ENCODE measurements at regions of chr2 and their contacts with region 1.

Region 1: GRCh38 chr2:30266051-30266621 is 34.8 kb downstream of the LBH start:
- DNase-seq: peak; percentile 75
- H3K4me3 Mint-ChIP-seq: peak overlapping the region; percentile 76
- H3K27ac Mint-ChIP-seq: peak overlapping the region; percentile 94
- H3K4me1 Mint-ChIP-seq: peaks cover 72% of the 10 kb centered on the region
- H3K27me3 Mint-ChIP-seq: no peaks in the 10 kb centered on the region

Region 2: GRCh38 chr2:30208452-30208851 is 57.7 kb before region 1 on chr2:
- CTCF ChIA-PET with region 1: interaction called, 16 read pairs
- POLR2A ChIA-PET with region 1: no interaction called
- intact Hi-C with region 1: no loop called
- DNase-seq: peak; percentile 56
- H3K4me3 Mint-ChIP-seq: no peak overlapping the region
- H3K27ac Mint-ChIP-seq: no peak overlapping the region
- H3K4me1 Mint-ChIP-seq: peaks cover 13% of the 10 kb centered on the region
- H3K27me3 Mint-ChIP-seq: no peaks in the 10 kb centered on the region

Region 3: DNA sequence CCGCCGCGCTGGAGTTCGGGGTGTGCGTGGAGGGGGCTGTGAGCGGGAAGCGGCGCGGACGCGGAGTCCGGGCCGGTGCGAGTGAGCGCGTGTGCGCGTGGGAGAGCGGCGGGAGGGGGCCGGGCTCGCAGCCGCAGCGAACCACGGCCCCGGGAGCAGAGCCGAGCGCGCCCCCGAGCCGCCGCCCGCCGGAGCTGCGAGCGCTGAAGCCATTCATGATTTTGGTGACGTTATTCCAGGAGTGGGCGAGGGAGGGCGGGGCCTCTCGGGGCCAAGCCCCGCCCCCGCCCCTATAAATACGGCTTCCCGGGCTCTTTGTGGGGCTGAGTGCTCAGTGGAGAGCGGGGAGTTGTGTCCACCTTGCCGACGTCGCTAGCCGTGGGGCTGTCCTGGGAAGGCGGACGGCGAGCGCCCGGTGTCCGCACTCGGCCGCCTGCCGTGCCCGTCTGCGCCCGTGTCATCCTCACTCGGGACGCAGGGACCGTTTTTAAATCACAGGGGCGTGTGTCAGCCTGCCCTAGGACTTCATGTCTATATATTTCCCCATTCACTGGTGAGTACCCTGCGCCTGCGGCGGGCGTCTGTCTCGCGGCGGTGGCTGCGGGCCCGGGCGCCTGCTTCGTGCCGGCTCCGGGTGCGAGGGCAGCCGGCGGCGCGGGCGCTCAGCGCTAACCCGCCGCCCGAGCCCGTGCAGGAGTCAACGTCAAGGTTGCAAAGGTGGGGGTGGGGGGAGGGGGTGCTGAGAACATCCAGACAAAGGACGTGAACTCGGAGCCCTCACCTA is 34.7 kb before region 1 on chr2 and contains the start of gene LBH:
- CTCF ChIA-PET with region 1: interaction called, 17 read pairs
- POLR2A ChIA-PET with region 1: interaction called, 114 read pairs
- intact Hi-C with region 1: loop called (anchors 1 kb)
- DNase-seq: peak; percentile 94
- H3K4me3 Mint-ChIP-seq: peak within 1 kb of the TSS; percentile 84
- H3K27ac Mint-ChIP-seq: peak within 1 kb of the TSS; percentile 94
- H3K4me1 Mint-ChIP-seq: peaks cover 63% of the 10 kb centered on the region
- H3K27me3 Mint-ChIP-seq: no peaks in the 10 kb centered on the region
- total RNA-seq, gene LBH: 109 to 112 TPM

Region 4: DNA sequence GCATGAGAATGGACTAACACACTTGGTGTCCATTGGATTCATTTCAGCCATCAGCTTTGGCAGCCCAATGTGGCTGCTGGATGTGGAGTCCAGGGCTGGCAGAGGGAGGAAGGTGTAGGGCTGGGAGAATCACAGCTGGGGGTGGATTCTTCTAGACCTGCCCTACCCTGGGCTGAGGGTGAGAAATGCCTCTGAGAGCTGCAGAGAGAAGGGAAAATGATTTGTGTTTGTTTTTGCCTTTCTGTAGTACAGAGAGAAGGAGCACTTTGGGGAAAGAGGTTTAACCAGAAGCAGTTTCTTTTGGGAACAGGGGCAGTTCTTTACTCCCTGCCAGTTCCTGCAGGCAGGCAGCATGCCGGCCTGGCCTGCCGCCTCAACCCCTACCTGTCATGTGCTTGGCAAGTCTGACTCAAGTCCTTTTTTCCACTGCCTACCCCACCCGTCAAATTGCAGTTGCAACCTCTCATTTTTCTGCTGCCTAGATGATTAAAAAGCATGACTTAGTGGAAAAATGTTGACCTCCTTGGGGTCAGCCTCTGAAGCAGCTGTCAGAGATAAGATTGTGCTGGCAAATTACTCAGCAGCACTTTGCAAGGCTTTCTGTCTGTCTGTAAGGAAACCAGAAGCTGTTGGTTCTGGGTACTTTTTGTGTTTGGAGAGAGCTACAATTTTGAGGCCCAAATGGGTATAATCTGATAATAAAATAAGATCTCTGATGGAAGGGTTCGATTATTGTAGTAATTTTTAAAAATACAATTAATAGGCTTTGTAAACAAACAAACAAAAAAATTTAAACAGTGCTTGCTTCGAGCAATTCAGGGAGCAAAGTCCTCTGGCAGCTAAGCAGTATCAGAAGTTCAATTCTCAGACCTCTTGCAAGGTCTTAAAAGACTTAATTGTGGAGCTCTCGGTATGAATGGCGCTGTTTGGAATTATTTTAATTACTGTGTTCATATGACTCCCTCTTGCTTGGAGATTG is 13.1 kb before region 1 on chr2:
- CTCF ChIA-PET with region 1: interaction called, 6 read pairs
- POLR2A ChIA-PET with region 1: interaction called, 19 read pairs
- intact Hi-C with region 1: loop called (anchors 1 kb)
- DNase-seq: peak; percentile 89
- H3K4me3 Mint-ChIP-seq: peak overlapping the region; percentile 33
- H3K27ac Mint-ChIP-seq: peak overlapping the region; percentile 92
- H3K4me1 Mint-ChIP-seq: peaks cover 96% of the 10 kb centered on the region
- H3K27me3 Mint-ChIP-seq: no peaks in the 10 kb centered on the region

Region 5: GRCh38 chr2:30315391-30316063 is 49.4 kb after region 1 on chr2:
- CTCF ChIA-PET with region 1: no interaction called
- POLR2A ChIA-PET with region 1: interaction called, 5 read pairs
- intact Hi-C with region 1: loop called (anchors 5 kb)
- DNase-seq: peak; percentile 47
- H3K4me3 Mint-ChIP-seq: no peak overlapping the region
- H3K27ac Mint-ChIP-seq: peak overlapping the region; percentile 71
- H3K4me1 Mint-ChIP-seq: peaks cover 36% of the 10 kb centered on the region
- H3K27me3 Mint-ChIP-seq: no peaks in the 10 kb centered on the region

Region 6: DNA sequence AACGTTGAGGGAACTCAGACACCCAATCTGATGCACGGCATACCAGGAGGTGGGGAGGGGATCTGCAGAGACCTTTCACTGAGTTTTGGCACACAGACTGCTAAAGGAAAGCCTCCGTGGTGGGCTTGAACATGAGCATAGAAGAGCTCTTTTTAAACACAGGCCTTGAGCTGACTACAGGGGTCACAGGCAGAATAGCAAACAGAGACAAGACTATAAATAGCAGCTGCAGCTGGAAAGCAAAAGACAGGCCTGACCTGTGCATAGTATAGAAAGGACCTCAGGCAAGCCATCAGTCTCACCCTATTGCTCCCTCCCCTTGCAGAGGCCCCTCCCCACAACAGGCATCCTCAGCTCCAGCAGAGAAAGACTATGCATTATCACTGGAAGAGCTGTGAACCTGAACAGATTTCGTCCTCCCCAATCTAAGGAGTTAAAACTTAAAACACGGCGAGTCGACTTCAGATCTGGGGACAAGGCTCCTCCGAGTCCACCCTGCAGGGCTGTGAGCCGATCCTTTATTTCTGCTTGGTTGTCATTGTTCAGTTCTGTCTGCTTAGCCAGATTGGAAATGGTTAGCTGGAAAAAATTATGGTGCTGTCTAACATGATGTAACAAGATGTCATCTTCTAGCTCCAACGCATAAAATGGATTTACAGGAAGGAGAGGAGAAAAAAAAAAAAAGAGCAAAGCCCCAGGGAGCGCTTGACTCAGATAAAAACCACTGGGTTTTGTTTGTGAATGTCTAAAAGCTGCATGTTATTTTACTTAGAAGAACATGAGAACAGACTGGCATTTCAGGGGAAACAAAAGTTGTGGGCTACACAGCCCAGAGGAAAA is 155.7 kb after region 1 on chr2:
- CTCF ChIA-PET with region 1: interaction called, 3 read pairs
- POLR2A ChIA-PET with region 1: no interaction called
- intact Hi-C with region 1: loop called (anchors 1 kb)
- DNase-seq: peak; percentile 44
- H3K4me3 Mint-ChIP-seq: peak overlapping the region; percentile 69
- H3K27ac Mint-ChIP-seq: peak overlapping the region; percentile 91
- H3K4me1 Mint-ChIP-seq: peaks cover 41% of the 10 kb centered on the region
- H3K27me3 Mint-ChIP-seq: no peaks in the 10 kb centered on the region